SK-MEL-5 (cell line): ENCODE measurements at regions of chr20 and their contacts with region 1.

Region 1: GRCh38 chr20:50815162-50815989 is 20.5 kb downstream of the BCAS4 start:
- DNase-seq: no peak

Region 2: GRCh38 chr20:50569864-50570836 is 245.2 kb before region 1 on chr20:
- in situ Hi-C with region 1: no loop called
- DNase-seq: peak; percentile 73

Region 3: DNA sequence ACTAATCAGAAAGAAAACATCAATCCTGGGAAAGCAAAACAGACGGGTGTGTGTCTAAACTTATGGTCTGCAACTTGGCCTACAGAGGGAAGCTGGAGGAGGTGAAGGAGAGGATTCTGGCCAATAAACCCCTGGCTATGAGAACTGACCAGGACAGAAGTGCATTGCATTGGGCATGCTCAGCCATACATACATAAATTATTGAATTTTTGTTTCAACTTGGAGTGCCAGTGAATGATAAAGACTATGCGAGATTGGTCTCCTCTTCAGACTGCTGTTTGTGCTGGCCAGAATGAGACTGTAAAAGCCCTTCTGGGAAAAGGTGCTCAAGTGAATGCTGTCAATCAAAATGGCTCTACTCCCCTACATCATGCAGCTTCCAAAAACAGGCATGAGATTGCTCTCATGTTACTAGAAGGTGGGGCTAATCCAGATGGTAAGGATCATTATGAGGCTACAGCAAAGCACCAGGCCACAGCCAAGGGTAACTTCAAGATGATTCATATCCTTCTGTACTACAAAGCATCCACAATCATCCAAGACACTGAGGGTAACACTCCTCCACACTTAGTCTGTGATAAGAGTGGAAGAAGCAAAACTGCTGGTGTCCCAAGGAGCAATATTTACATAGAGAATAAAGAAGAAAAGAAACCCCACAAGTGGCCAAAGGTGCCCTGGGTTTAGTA is 98.5 kb after region 1 on chr20:
- in situ Hi-C with region 1: loop called (anchors 25 kb)
- DNase-seq: no peak